ENCODE measurements at regions of chr6 and their contacts with region 1.

Region 1: GRCh38 chr6:79813854-79814709 is 133.3 kb downstream of the ELOVL4 start:
- DNase-seq: peak; percentile 79
- H3K4me3 Mint-ChIP-seq: no peak overlapping the region
- H3K27ac Mint-ChIP-seq: no peak overlapping the region
- H3K4me1 Mint-ChIP-seq: no peaks in the 10 kb centered on the region
- H3K27me3 Mint-ChIP-seq: no peaks in the 10 kb centered on the region
- CTCF ChIP-seq: peak; percentile 77

Region 2: GRCh38 chr6:79544939-79545450 is 269.1 kb before region 1 on chr6:
- CTCF ChIA-PET with region 1: no interaction called
- POLR2A ChIA-PET with region 1: no interaction called
- intact Hi-C with region 1: no loop called
- DNase-seq: peak; percentile 99
- H3K4me3 Mint-ChIP-seq: peak overlapping the region; percentile 51
- H3K27ac Mint-ChIP-seq: peak overlapping the region; percentile 95
- H3K4me1 Mint-ChIP-seq: peaks cover 8% of the 10 kb centered on the region
- H3K27me3 Mint-ChIP-seq: no peaks in the 10 kb centered on the region
- CTCF ChIP-seq: peak; percentile 25

Region 3: GRCh38 chr6:79802657-79803300 is 11.3 kb before region 1 on chr6:
- CTCF ChIA-PET with region 1: interaction called, 22 read pairs
- POLR2A ChIA-PET with region 1: interaction called, 5 read pairs
- intact Hi-C with region 1: no loop called
- DNase-seq: no peak
- H3K4me3 Mint-ChIP-seq: no peak overlapping the region
- H3K27ac Mint-ChIP-seq: no peak overlapping the region
- H3K4me1 Mint-ChIP-seq: no peaks in the 10 kb centered on the region
- H3K27me3 Mint-ChIP-seq: no peaks in the 10 kb centered on the region
- CTCF ChIP-seq: no peak

Region 4: GRCh38 chr6:79833264-79833963 is 19.3 kb after region 1 on chr6:
- CTCF ChIA-PET with region 1: interaction called, 14 read pairs
- POLR2A ChIA-PET with region 1: interaction called, 3 read pairs
- intact Hi-C with region 1: no loop called
- DNase-seq: peak; percentile 15
- H3K4me3 Mint-ChIP-seq: no peak overlapping the region
- H3K27ac Mint-ChIP-seq: no peak overlapping the region
- H3K4me1 Mint-ChIP-seq: peaks cover 6% of the 10 kb centered on the region
- H3K27me3 Mint-ChIP-seq: no peaks in the 10 kb centered on the region
- CTCF ChIP-seq: no peak